ENCODE measurements at regions of chr16 and their contacts with region 1.

Region 1: DNA sequence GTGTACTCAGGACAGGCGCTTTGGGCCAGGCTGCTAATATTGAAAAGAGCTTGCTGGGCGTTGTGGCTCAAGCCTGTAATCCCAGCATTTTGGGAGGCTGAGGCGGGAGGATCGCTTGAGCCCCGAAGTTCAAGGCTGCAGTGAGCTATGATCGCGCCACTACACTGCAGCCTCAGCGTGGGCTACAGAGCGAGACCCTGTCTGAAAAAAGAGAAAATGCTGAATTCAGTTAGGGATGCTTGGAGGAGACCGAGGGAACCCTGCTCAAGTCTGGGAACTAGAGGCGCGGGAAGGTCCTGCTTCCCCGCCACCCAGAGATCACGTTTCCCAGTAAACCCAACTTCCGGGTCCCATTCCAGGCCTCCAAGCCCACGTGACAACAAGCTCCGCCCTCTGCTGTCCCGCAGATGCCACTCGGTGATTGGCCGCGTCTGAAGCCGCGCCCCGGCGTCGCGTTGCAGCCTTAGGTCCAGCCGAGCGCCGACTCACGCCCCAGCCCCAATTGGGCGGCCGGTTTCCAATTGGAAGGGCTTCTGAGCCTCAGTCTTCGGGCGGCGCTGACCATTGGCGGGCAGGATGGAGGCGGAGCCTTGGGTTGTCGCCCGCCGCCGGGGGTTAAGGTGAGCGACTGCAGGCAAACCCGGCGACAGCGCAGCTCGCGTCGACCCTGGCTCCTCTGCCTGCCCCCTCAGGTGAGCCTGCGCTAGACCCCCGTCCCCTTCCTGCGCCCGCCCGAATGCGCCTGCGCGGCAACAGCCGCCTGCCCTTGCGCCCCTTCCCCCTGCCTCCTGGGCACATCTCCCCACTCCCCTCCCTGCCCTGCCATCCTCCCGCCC is at the start of gene PHKG2:
- DNase-seq: peak; percentile 97 to 99
- H3K4me3 ChIP-seq: peak within 1 kb of the TSS; percentile 84 to 99
- H3K27ac ChIP-seq: peak within 1 kb of the TSS; percentile 87
- H3K4me1 ChIP-seq: peaks cover 7 to 8% of the 10 kb centered on the region in 2 donors
- H3K27me3 ChIP-seq: no peaks in the 10 kb centered on the region
- CTCF ChIP-seq: no peak
- total RNA-seq, gene PHKG2: 78.8 TPM

Region 2: GRCh38 chr16:30761928-30762810 is 14.2 kb after region 1 on chr16 and contains the starts of genes CFAP119 and RNF40:
- intact Hi-C with region 1: loop called (anchors 1 kb)
- DNase-seq: peak; percentile 95 to 98
- H3K4me3 ChIP-seq: peak within 1 kb of the TSS; percentile 85 to 88
- H3K27ac ChIP-seq: peak within 1 kb of the TSS; percentile 89 to 96
- H3K4me1 ChIP-seq: peaks cover 16 to 20% of the 10 kb centered on the region in 2 donors
- H3K27me3 ChIP-seq: no peaks in the 10 kb centered on the region
- CTCF ChIP-seq: no peak
- total RNA-seq, gene CFAP119: not detected
- total RNA-seq, gene RNF40: 66.3 TPM